ENCODE measurements at regions of chr6 and their contacts with region 1.

Region 1: GRCh38 chr6:116279260-116280063 is at the start of gene TSPYL1:
- DNase-seq: peak; percentile 96
- ATAC-seq: peak; percentile 97
- total RNA-seq, gene TSPYL1: 78.2 to 90.8 TPM

Region 2: GRCh38 chr6:115847671-115848070 is 431.8 kb before region 1 on chr6:
- intact Hi-C with region 1: no loop called
- DNase-seq: no peak
- ATAC-seq: no peak

Region 3: DNA sequence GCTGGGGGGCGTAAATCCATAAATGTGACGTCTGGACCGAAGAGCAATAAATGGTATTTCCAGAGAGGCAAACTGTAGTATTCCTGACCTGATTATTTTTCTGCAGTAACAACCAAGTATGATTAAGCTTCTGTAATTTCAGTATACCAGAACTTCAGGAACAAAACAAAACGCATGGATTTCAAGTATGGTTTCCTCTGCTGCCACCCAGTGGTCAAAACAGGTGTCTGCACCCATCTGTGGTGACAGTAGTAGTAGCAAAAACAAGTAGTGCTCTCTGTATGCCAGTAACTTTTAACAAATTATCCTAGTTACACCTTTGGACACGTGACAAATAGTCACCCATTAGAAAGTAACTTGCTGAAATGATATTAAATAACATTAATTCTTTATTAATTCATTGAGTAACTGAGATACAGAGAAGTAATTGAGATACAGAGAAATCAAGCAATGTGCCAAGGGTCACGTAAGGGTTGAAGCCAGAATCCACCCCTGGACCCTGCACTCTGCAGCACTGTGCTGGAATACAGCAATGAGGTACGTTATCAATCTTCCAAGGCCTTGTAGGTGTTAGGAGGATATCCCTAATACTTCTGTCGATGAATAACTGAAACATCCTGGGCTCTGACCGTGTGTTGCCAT is 282.0 kb after region 1 on chr6:
- intact Hi-C with region 1: loop called (anchors 10 kb)
- DNase-seq: peak; percentile 69
- ATAC-seq: peak; percentile 41 to 56